GM10248 (cell line): ENCODE measurements at regions of chr6 and their contacts with region 1.

Region 1: GRCh38 chr6:69835414-69836179 is 30.8 kb upstream of the COL19A1 start:
- DNase-seq: peak; percentile 23
- CTCF ChIP-seq: peak; percentile 88

Region 2: GRCh38 chr6:69848552-69848951 is 13.0 kb after region 1 on chr6:
- CTCF ChIA-PET with region 1: interaction called, 10 read pairs
- POLR2A ChIA-PET with region 1: no interaction called
- DNase-seq: no peak
- CTCF ChIP-seq: no peak

Region 3: GRCh38 chr6:70028926-70029325 is 193.3 kb after region 1 on chr6:
- CTCF ChIA-PET with region 1: no interaction called
- POLR2A ChIA-PET with region 1: no interaction called
- DNase-seq: no peak
- CTCF ChIP-seq: no peak